ENCODE measurements at regions of chr2 and their contacts with region 1.

Region 1: GRCh38 chr2:86124683-86125082 is 18.6 kb downstream of the PTCD3 start:
- DNase-seq: no peak
- H3K4me3 ChIP-seq: no peak overlapping the region
- H3K27ac ChIP-seq: no peak overlapping the region
- H3K4me1 ChIP-seq: no peaks in the 10 kb centered on the region
- H3K27me3 ChIP-seq: no peaks in the 10 kb centered on the region
- CTCF ChIP-seq: no peak

Region 2: GRCh38 chr2:86017901-86018896 is 106.5 kb before region 1 on chr2:
- intact Hi-C with region 1: no loop called
- DNase-seq: no peak
- H3K4me3 ChIP-seq: no peak overlapping the region
- H3K27ac ChIP-seq: no peak overlapping the region
- H3K4me1 ChIP-seq: peaks cover 4% of the 10 kb centered on the region
- H3K27me3 ChIP-seq: no peaks in the 10 kb centered on the region
- CTCF ChIP-seq: no peak

Region 3: DNA sequence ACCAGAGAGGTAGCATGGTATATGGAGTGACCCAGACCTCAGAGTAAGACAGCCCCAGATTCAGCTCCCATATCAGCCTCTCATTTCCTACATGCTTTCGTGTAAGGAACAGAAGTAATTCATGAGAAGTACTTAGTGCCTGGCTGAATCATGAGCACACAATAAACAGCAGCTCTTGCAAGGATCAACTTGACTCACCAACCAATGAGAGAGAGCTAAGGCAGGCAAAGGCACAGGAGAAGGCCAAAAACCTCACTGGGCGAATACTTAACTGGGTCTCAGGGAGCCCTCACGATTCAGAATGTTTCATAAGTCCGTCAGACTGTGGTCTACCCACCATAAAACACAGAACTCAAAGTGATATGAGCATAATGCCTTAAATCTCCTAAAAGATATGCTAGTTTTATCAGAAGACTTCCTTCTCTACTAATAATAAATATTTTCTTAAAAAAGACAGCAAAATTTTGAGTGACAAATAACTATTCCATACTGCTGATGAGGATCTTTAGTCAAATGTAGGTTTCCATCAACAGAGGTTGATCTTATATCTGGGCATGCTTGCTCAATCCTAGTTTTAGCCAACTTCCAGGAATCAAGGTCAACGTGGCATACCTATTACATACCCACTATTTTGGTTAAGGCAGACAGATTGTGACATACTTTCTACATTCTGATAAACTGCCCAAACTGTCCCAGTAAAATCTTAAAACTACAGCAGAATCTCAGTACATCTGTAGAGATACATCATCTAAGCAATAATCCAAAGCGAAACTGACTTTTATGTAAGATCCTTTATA is 35.7 kb after region 1 on chr2:
- intact Hi-C with region 1: loop called (anchors 5 kb)
- DNase-seq: no peak
- H3K4me3 ChIP-seq: no peak overlapping the region
- H3K27ac ChIP-seq: no peak overlapping the region
- H3K4me1 ChIP-seq: no peaks in the 10 kb centered on the region
- H3K27me3 ChIP-seq: no peaks in the 10 kb centered on the region
- CTCF ChIP-seq: no peak

Measured in colonic mucosa (tissue), 4 donors.